ENCODE measurements at regions of chr15 and their contacts with region 1.

Region 1: GRCh38 chr15:68192804-68193486 is 12.2 kb downstream of the CALML4 start:
- DNase-seq: no peak
- H3K4me3 ChIP-seq: no peak overlapping the region
- H3K27ac ChIP-seq: no peak overlapping the region
- H3K4me1 ChIP-seq: peaks cover 10% of the 10 kb centered on the region
- H3K27me3 ChIP-seq: no peaks in the 10 kb centered on the region
- CTCF ChIP-seq: no peak
- EP300 ChIP-seq: no peak
- POLR2A ChIP-seq: no peak

Region 2: DNA sequence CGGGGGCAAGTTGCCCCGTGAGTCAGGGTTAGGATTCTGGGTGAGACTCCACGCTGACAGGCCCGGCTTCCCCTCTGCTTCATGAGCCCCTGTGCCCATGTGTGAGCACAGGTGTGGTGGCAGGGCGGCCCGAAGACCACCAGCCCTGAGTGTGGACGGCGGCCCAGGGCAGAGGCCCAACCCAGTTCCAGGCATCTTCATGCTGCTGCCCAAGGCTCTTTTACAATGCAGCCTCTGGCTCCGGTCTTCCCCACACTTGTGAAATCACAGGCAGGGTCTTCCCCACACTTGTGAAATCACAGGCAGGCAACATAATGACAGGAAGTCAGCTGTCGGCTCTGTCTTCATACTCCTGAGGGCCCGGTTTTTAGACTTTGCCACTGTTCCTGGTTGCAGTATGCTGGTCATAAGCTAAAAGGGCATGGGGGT is 1017.3 kb before region 1 on chr15:
- intact Hi-C with region 1: loop called in 1 of 4 experiments (anchors 10 kb)
- DNase-seq: peak in 3 of 5 donors; percentile 16 to 35 (median 22)
- H3K4me3 ChIP-seq: no peak overlapping the region
- H3K27ac ChIP-seq: no peak overlapping the region
- H3K4me1 ChIP-seq: peaks cover 18% of the 10 kb centered on the region
- H3K27me3 ChIP-seq: no peaks in the 10 kb centered on the region
- CTCF ChIP-seq: no peak
- EP300 ChIP-seq: no peak
- POLR2A ChIP-seq: no peak

Region 3: DNA sequence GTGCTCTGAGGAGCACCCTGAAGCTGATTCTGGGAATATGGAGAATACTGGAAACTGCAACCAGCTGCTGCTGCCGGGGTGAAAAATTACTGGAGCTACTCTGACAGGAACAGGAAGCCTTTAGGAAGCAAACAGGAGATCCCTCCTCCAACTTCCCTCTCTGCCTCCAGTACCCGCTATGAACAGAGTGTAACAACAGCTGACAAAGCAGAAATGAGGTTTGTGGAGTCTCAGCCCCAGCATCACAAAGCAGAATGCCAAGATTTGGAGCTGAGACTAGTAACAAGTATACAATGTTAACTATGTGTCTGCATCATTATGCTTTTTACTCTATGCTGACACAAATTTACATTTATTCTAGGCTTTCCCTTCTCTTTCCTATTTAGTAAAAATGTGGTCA is 161.5 kb before region 1 on chr15:
- intact Hi-C with region 1: no loop called
- DNase-seq: no peak
- H3K4me3 ChIP-seq: no peak overlapping the region
- H3K27ac ChIP-seq: no peak overlapping the region
- H3K4me1 ChIP-seq: no peaks in the 10 kb centered on the region
- H3K27me3 ChIP-seq: no peaks in the 10 kb centered on the region
- CTCF ChIP-seq: no peak
- EP300 ChIP-seq: no peak
- POLR2A ChIP-seq: no peak